Activated CD8-positive, alpha-beta T cell treated with anti-CD3 and anti-CD28 coated beads, Interleukin-2, amount 10 ng/mL, durations not matched to agents 7 days and 5 days (primary cell): ENCODE measurements at regions of chr1 and their contacts with region 1.

Region 1: DNA sequence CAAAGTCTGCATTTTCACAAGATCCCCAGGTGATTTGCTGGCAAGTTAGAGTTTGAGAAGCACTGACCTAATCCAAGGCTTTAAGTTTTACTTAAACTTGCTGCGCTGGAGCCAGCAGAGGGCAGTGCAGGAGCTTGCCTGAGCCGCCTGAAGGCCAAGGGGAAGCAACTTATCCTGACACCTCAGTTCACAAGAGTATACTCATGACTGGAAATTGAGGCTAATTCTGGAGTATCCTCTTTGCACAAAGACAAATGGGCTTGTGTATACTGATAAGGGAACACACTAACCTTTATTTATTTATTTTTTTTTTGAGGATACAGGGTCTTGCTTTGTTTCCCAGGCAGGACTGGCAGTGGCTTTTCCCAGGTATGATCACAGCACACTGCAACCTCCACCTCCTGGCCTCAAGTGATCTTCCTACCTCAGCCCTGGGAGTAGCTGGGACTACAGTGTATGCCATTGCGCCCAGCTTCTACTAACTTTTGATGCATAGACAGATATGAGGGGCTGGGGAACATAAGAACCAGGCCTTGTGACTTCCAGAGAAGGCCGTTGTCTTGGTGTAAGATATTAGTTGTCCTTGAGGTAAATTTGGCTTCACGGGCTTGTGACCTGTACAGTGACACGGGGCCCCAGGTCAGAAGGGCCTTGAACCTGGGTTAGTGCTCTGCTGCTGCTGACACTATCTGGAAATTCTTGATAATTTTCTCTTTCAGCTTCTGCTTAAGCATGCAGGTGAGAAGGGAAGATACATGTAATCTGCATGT is 29.0 kb upstream of the SLAMF1 start:
- DNase-seq: peak; percentile 86
- ATAC-seq: peak; percentile 79
- H3K4me3 Mint-ChIP-seq: no peak overlapping the region
- H3K27ac Mint-ChIP-seq: peak overlapping the region; percentile 80
- H3K4me1 Mint-ChIP-seq: peaks cover 44% of the 10 kb centered on the region
- H3K27me3 Mint-ChIP-seq: no peaks in the 10 kb centered on the region

Region 2: GRCh38 chr1:160629286-160630210 is 46.3 kb before region 1 on chr1:
- CTCF ChIA-PET with region 1: interaction called, 76 read pairs
- POLR2A ChIA-PET with region 1: interaction called, 12 read pairs
- DNase-seq: peak; percentile 90
- ATAC-seq: peak; percentile 75
- H3K4me3 Mint-ChIP-seq: peak overlapping the region; percentile 70
- H3K27ac Mint-ChIP-seq: peak overlapping the region; percentile 92
- H3K4me1 Mint-ChIP-seq: peaks cover 97% of the 10 kb centered on the region
- H3K27me3 Mint-ChIP-seq: no peaks in the 10 kb centered on the region

Region 3: GRCh38 chr1:160646711-160647328 is 29.0 kb before region 1 on chr1 and contains the start of gene SLAMF1:
- CTCF ChIA-PET with region 1: interaction called, 65 read pairs
- POLR2A ChIA-PET with region 1: interaction called, 4 read pairs
- DNase-seq: peak; percentile 55
- ATAC-seq: peak; percentile 53
- H3K4me3 Mint-ChIP-seq: peak within 1 kb of the TSS; percentile 87
- H3K27ac Mint-ChIP-seq: peak within 1 kb of the TSS; percentile 82
- H3K4me1 Mint-ChIP-seq: peaks cover 63% of the 10 kb centered on the region
- H3K27me3 Mint-ChIP-seq: no peaks in the 10 kb centered on the region
- total RNA-seq, gene SLAMF1: 48.5 to 50.1 TPM

Region 4: GRCh38 chr1:160711602-160712311 is 35.9 kb after region 1 on chr1 and contains the start of gene CD48:
- CTCF ChIA-PET with region 1: interaction called, 105 read pairs
- POLR2A ChIA-PET with region 1: interaction called, 15 read pairs
- DNase-seq: peak; percentile 79
- ATAC-seq: peak; percentile 48
- H3K4me3 Mint-ChIP-seq: no peak within 1 kb of the TSS
- H3K27ac Mint-ChIP-seq: no peak within 1 kb of the TSS
- H3K4me1 Mint-ChIP-seq: peaks cover 39% of the 10 kb centered on the region
- H3K27me3 Mint-ChIP-seq: no peaks in the 10 kb centered on the region
- total RNA-seq, gene CD48: 325 to 327 TPM

Region 5: DNA sequence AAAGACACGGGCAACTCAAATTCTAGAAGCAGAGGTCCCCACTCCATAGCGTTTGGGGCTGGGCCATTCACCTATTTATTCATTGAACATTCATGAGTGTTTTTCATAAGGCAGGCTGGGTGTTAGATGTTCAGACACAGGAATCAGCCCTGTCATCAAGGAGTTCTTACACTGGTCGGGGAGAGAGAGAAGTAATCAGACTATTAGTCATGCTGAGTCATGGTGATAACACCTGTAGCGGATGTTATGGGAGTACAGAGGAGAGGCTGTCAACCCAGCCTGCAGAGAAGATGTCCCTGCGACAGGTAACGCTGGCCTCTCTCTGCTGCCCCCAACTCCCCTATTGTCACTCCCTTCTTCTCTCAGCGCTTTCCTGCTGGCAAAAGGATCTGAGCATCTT is 137.4 kb after region 1 on chr1:
- CTCF ChIA-PET with region 1: no interaction called
- POLR2A ChIA-PET with region 1: no interaction called
- DNase-seq: no peak
- ATAC-seq: no peak
- H3K4me3 Mint-ChIP-seq: no peak overlapping the region
- H3K27ac Mint-ChIP-seq: no peak overlapping the region
- H3K4me1 Mint-ChIP-seq: peaks cover 6% of the 10 kb centered on the region
- H3K27me3 Mint-ChIP-seq: no peaks in the 10 kb centered on the region